ENCODE measurements at regions of chr17 and their contacts with region 1.

Region 1: GRCh38 chr17:44186307-44187130 is at the start of gene TMUB2:
- DNase-seq: peak; percentile 100
- ATAC-seq: peak; percentile 92
- H3K4me3 Mint-ChIP-seq: peak within 1 kb of the TSS; percentile 99
- H3K27ac Mint-ChIP-seq: peak within 1 kb of the TSS; percentile 100
- H3K4me1 Mint-ChIP-seq: peaks cover 32% of the 10 kb centered on the region
- H3K27me3 Mint-ChIP-seq: no peaks in the 10 kb centered on the region
- total RNA-seq, gene TMUB2: 19.8 to 20.3 TPM

Region 2: DNA sequence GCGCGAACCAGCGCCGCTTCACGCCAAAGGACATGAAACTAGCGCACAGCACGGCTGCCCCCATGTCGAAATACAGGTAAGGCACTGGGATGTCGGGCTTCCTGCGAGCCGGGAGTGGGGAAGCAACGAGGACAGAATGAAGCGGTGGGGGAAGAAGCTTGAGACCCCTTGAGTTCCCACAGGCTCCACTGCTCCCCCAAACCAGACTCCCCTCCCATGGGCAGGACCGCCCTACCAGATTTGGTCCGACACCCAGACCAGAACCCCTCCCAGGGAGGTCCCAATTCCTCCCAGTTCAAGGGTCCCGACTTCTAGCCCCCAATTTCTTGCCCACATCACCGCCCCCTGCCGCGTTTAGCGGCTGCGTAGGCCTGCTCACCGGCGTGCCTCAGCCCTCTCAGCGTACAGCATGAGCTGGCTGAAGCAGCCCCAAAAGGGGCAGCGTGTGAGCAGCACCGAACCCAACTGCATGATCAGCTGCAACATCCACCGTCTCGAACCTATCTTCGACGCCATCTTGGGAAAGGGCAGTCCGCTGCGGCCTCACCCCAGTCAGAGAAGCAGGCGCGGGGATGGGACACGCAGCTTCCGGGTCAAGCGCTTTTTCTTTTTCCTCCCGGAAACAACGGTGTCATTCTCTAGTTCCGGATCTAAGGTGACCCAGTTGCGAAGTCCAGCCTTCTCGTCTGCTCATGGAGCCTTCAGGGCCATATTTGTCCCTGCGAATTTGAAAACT is 171.9 kb before region 1 on chr17 and contains the start of gene TMEM101:
- CTCF ChIA-PET with region 1: interaction called, 3 read pairs
- POLR2A ChIA-PET with region 1: interaction called, 9 read pairs
- intact Hi-C with region 1: loop called in 1 of 2 experiments (anchors 1 kb)
- DNase-seq: peak; percentile 94
- ATAC-seq: peak; percentile 99
- H3K4me3 Mint-ChIP-seq: peak within 1 kb of the TSS; percentile 96
- H3K27ac Mint-ChIP-seq: peak within 1 kb of the TSS; percentile 96
- H3K4me1 Mint-ChIP-seq: peaks cover 7% of the 10 kb centered on the region
- H3K27me3 Mint-ChIP-seq: no peaks in the 10 kb centered on the region
- total RNA-seq, gene TMEM101: 17.6 to 22.7 TPM

Region 3: DNA sequence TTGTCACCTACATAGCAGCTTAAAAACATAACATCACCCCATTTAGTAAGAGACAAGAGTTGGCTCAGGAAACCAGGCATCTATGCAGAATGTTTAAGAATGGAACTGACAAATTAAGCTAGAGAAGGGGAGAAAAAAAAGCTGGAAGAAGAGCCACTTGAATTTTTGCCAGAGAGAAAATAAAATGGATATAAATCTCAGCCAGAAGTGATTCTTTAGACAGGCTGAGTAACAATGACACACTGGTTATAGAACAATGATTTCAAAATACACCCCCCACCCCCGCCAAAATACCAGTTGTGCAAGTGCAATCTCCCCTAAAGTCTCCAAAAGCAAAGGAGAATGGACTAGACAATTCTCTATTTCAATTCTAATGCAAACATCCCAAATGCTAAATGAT is 142.5 kb before region 1 on chr17:
- CTCF ChIA-PET with region 1: no interaction called
- POLR2A ChIA-PET with region 1: no interaction called
- intact Hi-C with region 1: no loop called
- DNase-seq: no peak
- ATAC-seq: no peak
- H3K4me3 Mint-ChIP-seq: no peak overlapping the region
- H3K27ac Mint-ChIP-seq: no peak overlapping the region
- H3K4me1 Mint-ChIP-seq: peaks cover 9% of the 10 kb centered on the region
- H3K27me3 Mint-ChIP-seq: no peaks in the 10 kb centered on the region

Region 4: GRCh38 chr17:44077595-44077909 is 109.0 kb before region 1 on chr17:
- CTCF ChIA-PET with region 1: no interaction called
- POLR2A ChIA-PET with region 1: no interaction called
- intact Hi-C with region 1: no loop called
- DNase-seq: no peak
- ATAC-seq: no peak
- H3K4me3 Mint-ChIP-seq: no peak overlapping the region
- H3K27ac Mint-ChIP-seq: no peak overlapping the region
- H3K4me1 Mint-ChIP-seq: peaks cover 4% of the 10 kb centered on the region
- H3K27me3 Mint-ChIP-seq: no peaks in the 10 kb centered on the region

Region 5: DNA sequence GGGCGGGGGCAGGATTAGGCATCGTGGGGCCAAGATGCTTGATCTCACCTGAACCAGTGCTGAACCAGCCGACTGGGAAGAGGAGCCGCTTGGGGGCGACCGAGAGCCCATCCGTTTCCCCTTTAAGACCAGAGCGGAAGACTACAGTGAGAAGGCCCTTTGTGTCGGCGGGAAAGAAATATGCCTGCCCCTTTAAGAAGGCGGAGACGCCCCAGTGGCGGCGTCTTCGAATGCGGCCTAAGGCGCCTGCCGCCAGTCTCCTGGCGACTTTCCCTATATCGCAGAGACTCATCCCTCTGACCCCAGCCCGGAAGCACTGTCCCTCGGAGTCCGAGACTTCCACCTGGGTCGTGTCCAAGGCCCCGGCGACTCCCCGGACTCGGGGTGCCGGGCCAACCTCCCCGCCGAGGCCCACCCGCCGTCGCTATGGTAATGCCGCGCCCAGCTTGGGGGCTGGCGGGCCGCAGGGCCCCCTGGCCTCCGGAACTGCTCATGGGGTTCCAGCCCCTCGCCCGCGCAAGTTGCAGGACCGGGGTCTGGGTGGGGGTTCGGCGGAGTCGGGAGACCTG is 44.7 kb before region 1 on chr17 and contains the start of gene HROB:
- CTCF ChIA-PET with region 1: interaction called, 4 read pairs
- POLR2A ChIA-PET with region 1: interaction called, 6 read pairs
- intact Hi-C with region 1: loop called (anchors 1 kb)
- DNase-seq: peak; percentile 99
- ATAC-seq: peak; percentile 83
- H3K4me3 Mint-ChIP-seq: peak within 1 kb of the TSS; percentile 91
- H3K27ac Mint-ChIP-seq: peak within 1 kb of the TSS; percentile 85
- H3K4me1 Mint-ChIP-seq: peaks cover 24% of the 10 kb centered on the region
- H3K27me3 Mint-ChIP-seq: peaks cover 2% of the 10 kb centered on the region
- total RNA-seq, gene HROB: 17.1 to 23.3 TPM

Region 6: GRCh38 chr17:44159519-44160210 is 26.9 kb before region 1 on chr17:
- CTCF ChIA-PET with region 1: no interaction called
- POLR2A ChIA-PET with region 1: no interaction called
- intact Hi-C with region 1: no loop called
- DNase-seq: peak; percentile 44
- ATAC-seq: peak; percentile 60
- H3K4me3 Mint-ChIP-seq: no peak overlapping the region
- H3K27ac Mint-ChIP-seq: no peak overlapping the region
- H3K4me1 Mint-ChIP-seq: peaks cover 4% of the 10 kb centered on the region
- H3K27me3 Mint-ChIP-seq: no peaks in the 10 kb centered on the region

Region 7: GRCh38 chr17:44210342-44211192 is 24.0 kb after region 1 on chr17:
- CTCF ChIA-PET with region 1: interaction called, 28 read pairs
- POLR2A ChIA-PET with region 1: interaction called, 20 read pairs
- intact Hi-C with region 1: no loop called
- DNase-seq: peak; percentile 96
- ATAC-seq: peak; percentile 84
- H3K4me3 Mint-ChIP-seq: peak overlapping the region; percentile 79
- H3K27ac Mint-ChIP-seq: peak overlapping the region; percentile 98
- H3K4me1 Mint-ChIP-seq: peaks cover 60% of the 10 kb centered on the region
- H3K27me3 Mint-ChIP-seq: no peaks in the 10 kb centered on the region

Region 8: GRCh38 chr17:44344939-44345453 is 158.5 kb after region 1 on chr17 and contains the start of gene GRN:
- CTCF ChIA-PET with region 1: interaction called, 17 read pairs
- POLR2A ChIA-PET with region 1: no interaction called
- intact Hi-C with region 1: loop called in 1 of 2 experiments (anchors 1 kb)
- DNase-seq: peak; percentile 92
- ATAC-seq: peak; percentile 99
- H3K4me3 Mint-ChIP-seq: peak within 1 kb of the TSS; percentile 87
- H3K27ac Mint-ChIP-seq: peak within 1 kb of the TSS; percentile 80
- H3K4me1 Mint-ChIP-seq: peaks cover 11% of the 10 kb centered on the region
- H3K27me3 Mint-ChIP-seq: no peaks in the 10 kb centered on the region
- total RNA-seq, gene GRN: 35.4 to 68.0 TPM

Region 9: GRCh38 chr17:45161019-45161825 is 974.7 kb after region 1 on chr17:
- CTCF ChIA-PET with region 1: no interaction called
- POLR2A ChIA-PET with region 1: no interaction called
- intact Hi-C with region 1: loop called in 1 of 2 experiments (anchors 1 kb)
- DNase-seq: peak; percentile 97
- ATAC-seq: peak; percentile 97
- H3K4me3 Mint-ChIP-seq: peak overlapping the region; percentile 96
- H3K27ac Mint-ChIP-seq: peak overlapping the region; percentile 96
- H3K4me1 Mint-ChIP-seq: peaks cover 26% of the 10 kb centered on the region
- H3K27me3 Mint-ChIP-seq: no peaks in the 10 kb centered on the region